Posterior vena cava (tissue), 2 donors: ENCODE measurements at regions of chr2 and their contacts with region 1.

Region 1: GRCh38 chr2:218395797-218396687 is 3.6 kb upstream of the CTDSP1 start:
- DNase-seq: peak; percentile 98

Region 2: GRCh38 chr2:217471319-217471718 is 924.7 kb before region 1 on chr2:
- intact Hi-C with region 1: no loop called
- DNase-seq: no peak

Region 3: GRCh38 chr2:218269899-218270720 is 125.9 kb before region 1 on chr2 and contains the starts of genes AAMP and PNKD:
- intact Hi-C with region 1: loop called in 1 of 2 experiments (anchors 5 kb)
- DNase-seq: peak; percentile 100
- total RNA-seq, gene AAMP: 43.3 to 45.0 TPM
- total RNA-seq, gene PNKD: 29.8 to 45.3 TPM

Region 4: GRCh38 chr2:218292048-218293014 is 103.7 kb before region 1 on chr2 and contains the start of gene TMBIM1:
- intact Hi-C with region 1: loop called (anchors 5 to 10 kb)
- DNase-seq: peak; percentile 96
- total RNA-seq, gene TMBIM1: 191 to 195 TPM